WTC11 (cell line): ENCODE measurements at regions of chrX and their contacts with region 1.

Region 1: DNA sequence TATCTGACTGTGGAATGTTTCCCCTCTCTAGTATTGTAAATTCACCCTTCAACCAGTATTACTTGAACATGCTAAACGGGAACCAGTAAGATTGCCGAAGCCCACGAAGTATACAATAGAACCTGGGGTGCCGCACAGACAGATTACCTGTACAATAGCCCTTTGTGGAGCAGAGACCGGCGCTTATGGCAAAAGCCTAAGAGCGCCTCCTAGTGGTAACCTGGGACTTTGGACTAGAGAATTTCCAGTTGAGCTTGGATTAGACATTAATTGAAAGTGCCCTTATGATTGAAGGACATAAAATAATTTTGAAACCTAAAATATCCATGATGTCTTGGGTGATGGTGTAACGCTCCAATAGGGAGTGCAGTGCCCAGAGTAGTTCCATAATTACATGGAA is 14.1 kb downstream of the ZNF157 start:
- DNase-seq: peak; percentile 57
- ATAC-seq: peak; percentile 64
- H3K4me3 Mint-ChIP-seq: no peak overlapping the region
- H3K27ac Mint-ChIP-seq: no peak overlapping the region
- H3K4me1 Mint-ChIP-seq: peaks cover 28% of the 10 kb centered on the region
- H3K27me3 Mint-ChIP-seq: no peaks in the 10 kb centered on the region
- CTCF ChIP-seq: peak; percentile 46

Region 2: DNA sequence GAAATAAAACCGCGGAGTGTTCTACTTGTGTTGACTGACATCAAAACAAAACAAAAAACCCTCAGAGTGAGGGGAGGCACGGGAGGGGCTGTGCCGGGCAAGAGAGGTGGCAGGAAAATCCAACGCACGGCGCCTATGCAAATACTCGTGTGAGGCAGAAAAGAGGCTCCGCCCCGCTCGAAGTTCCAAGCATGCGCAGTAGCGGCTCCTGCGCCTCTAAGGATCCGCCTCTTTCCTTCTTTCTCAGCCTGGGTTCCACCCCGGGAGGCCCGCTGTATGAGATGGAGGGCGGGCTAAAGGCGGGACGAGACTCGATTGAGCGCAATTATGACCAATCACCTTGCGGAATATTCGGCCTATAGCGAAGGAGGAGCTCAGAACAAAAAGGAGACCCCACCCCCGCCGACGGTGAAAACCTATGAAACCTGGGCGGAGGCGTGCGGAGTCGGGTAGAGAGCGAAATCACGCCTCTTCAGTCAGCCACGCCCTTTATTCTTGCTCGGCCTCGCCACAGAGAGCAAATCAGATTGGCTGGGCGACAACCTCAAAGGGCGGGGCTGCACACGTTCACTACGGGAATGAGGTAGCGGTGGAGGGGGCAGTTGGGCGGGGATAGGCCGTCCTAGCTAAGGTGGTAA is 166.7 kb before region 1 on chrX:
- CTCF ChIA-PET with region 1: interaction called, 18 read pairs
- POLR2A ChIA-PET with region 1: no interaction called
- DNase-seq: peak; percentile 94
- ATAC-seq: peak; percentile 87
- H3K4me3 Mint-ChIP-seq: peak overlapping the region; percentile 90
- H3K27ac Mint-ChIP-seq: peak overlapping the region; percentile 99
- H3K4me1 Mint-ChIP-seq: peaks cover 30% of the 10 kb centered on the region
- H3K27me3 Mint-ChIP-seq: no peaks in the 10 kb centered on the region; the same call in 1 of the 2 replicates
- CTCF ChIP-seq: no peak

Region 3: GRCh38 chrX:47311932-47312774 is 72.3 kb before region 1 on chrX:
- CTCF ChIA-PET with region 1: interaction called, 12 read pairs
- POLR2A ChIA-PET with region 1: no interaction called
- DNase-seq: peak; percentile 56
- ATAC-seq: peak; percentile 60
- H3K4me3 Mint-ChIP-seq: no peak overlapping the region
- H3K27ac Mint-ChIP-seq: peak overlapping the region; percentile 98
- H3K4me1 Mint-ChIP-seq: peaks cover 30% of the 10 kb centered on the region
- H3K27me3 Mint-ChIP-seq: no peaks in the 10 kb centered on the region; the same call in 1 of the 2 replicates
- CTCF ChIP-seq: 0 out of 2 replicates have a peak, but pooled peaks have one; percentile 19

Region 4: GRCh38 chrX:47321386-47321785 is 63.1 kb before region 1 on chrX:
- CTCF ChIA-PET with region 1: interaction called, 12 read pairs
- POLR2A ChIA-PET with region 1: interaction called, 4 read pairs
- DNase-seq: peak; percentile 87
- ATAC-seq: peak; percentile 89
- H3K4me3 Mint-ChIP-seq: peak overlapping the region; percentile 37
- H3K27ac Mint-ChIP-seq: peak overlapping the region; percentile 99
- H3K4me1 Mint-ChIP-seq: peaks cover 34% of the 10 kb centered on the region
- H3K27me3 Mint-ChIP-seq: no peaks in the 10 kb centered on the region
- CTCF ChIP-seq: no peak

Region 5: GRCh38 chrX:47523297-47523696 is 138.8 kb after region 1 on chrX:
- CTCF ChIA-PET with region 1: interaction called, 15 read pairs
- POLR2A ChIA-PET with region 1: no interaction called
- DNase-seq: peak; percentile 83
- ATAC-seq: peak; percentile 98
- H3K4me3 Mint-ChIP-seq: peak overlapping the region; percentile 71
- H3K27ac Mint-ChIP-seq: no peak overlapping the region
- H3K4me1 Mint-ChIP-seq: 0 out of 2 replicates have a peak, but pooled peaks cover 3% of the 10 kb centered on the region
- H3K27me3 Mint-ChIP-seq: peaks cover 9% of the 10 kb centered on the region
- CTCF ChIP-seq: peak; percentile 69